Heart right ventricle (tissue), 16 donors: ENCODE measurements at regions of chr11 and their contacts with region 1.

Region 1: GRCh38 chr11:34492806-34493414 is 20.7 kb downstream of the ELF5 start:
- DNase-seq: peak in 1 of 2 donors; percentile 41
- ATAC-seq: no peak
- H3K4me3 ChIP-seq: no peak overlapping the region
- H3K27ac ChIP-seq: no peak overlapping the region
- H3K4me1 ChIP-seq: no peaks in the 10 kb centered on the region
- H3K27me3 ChIP-seq: peaks cover 0 to 19% (median 7%) of the 10 kb centered on the region in 7 donors
- CTCF ChIP-seq: peak; percentile 47 to 77 (median 70)

Region 2: GRCh38 chr11:34002268-34002807 is 490.6 kb before region 1 on chr11:
- intact Hi-C with region 1: loop called in 2 of 10 experiments (anchors 10 kb)
- DNase-seq: no peak
- ATAC-seq: no peak
- H3K4me3 ChIP-seq: no peak overlapping the region
- H3K27ac ChIP-seq: no peak overlapping the region
- H3K4me1 ChIP-seq: peaks cover 0 to 2% (median 0%) of the 10 kb centered on the region in 9 donors
- H3K27me3 ChIP-seq: peaks cover 0 to 25% (median 14%) of the 10 kb centered on the region in 7 donors
- CTCF ChIP-seq: no peak

Region 3: GRCh38 chr11:34174412-34175041 is 318.4 kb before region 1 on chr11:
- intact Hi-C with region 1: loop called in 6 of 10 experiments (anchors 5 to 10 kb)
- DNase-seq: peak; percentile 82 to 86
- ATAC-seq: peak; percentile 96 to 99 (median 98)
- H3K4me3 ChIP-seq: peak overlapping the region in 8 of 10 donors; percentile 21 to 39 (median 34)
- H3K27ac ChIP-seq: peak overlapping the region in 2 of 10 donors; percentile 3 to 42
- H3K4me1 ChIP-seq: peaks cover 0 to 19% (median 13%) of the 10 kb centered on the region in 9 donors
- H3K27me3 ChIP-seq: peaks cover 0 to 11% (median 0%) of the 10 kb centered on the region in 7 donors
- CTCF ChIP-seq: peak; percentile 83 to 97 (median 92)